T-cell (primary cell): ENCODE measurements at regions of chr16 and their contacts with region 1.

Region 1: DNA sequence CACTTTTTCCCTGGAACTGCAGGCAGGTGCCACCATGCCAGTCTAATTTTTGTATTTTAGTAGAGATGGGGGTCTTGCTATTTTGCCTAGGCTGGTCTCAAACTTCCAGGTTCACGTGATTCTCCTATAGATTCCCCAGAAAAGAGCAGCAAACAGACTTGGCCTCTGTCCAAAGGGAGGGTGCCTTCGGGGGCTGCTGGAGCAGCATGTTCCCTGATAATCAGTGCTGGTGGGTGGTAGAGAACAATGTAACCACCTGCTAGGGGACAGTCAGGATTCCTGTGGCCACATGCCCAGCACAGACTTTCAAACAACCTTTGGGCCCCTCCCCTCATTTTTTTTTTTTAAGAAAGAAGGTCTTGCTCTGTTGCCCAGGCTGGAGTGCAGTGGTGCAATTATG is 14.2 kb upstream of the CCNF start:
- DNase-seq: no peak
- ATAC-seq: no peak
- H3K4me3 ChIP-seq: no peak overlapping the region
- H3K4me3 Mint-ChIP-seq: no peak overlapping the region
- H3K27ac ChIP-seq: no peak overlapping the region
- H3K27ac Mint-ChIP-seq: no peak overlapping the region
- H3K4me1 ChIP-seq: no peaks in the 10 kb centered on the region
- H3K4me1 Mint-ChIP-seq: no peaks in the 10 kb centered on the region
- H3K27me3 ChIP-seq: peaks cover 2 to 30% of the 10 kb centered on the region in 2 experiments
- H3K27me3 Mint-ChIP-seq: peaks cover 11 to 20% of the 10 kb centered on the region in 2 donors

Region 2: DNA sequence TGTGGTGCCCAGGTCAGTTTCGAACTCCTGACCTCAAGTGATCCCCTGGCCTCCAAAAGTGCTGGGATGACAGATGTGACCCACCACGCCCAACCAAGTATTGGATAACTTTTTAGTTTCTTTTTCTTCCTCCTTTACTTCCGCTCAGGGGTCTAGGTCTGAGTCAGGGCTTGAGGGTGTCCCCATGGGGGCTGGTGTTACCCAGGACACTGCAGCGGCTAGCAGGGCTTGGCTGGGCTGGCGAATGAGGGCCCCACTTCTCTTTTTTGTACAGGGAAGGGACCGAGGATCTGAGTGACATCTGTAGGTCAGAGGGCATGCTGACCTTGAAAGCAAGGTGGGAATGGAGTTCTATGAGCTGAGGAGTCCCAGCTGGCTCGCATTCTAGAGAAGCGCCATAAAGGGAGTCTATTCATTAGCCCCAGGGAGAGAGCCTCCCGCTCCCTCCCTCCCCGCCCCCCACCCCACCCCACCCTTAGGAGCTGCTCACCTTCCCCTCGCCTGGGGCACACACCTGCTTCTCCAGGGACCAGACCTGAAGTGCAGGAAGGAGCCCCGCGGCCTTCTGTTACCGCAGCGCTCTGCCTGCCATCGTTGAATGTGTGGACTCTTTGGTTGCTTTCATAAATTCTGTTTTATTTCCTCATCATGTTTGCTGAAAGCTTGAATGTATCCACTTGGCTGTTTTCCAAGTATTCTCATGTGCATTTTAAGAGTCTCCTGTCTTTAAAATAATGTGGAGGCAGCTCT is 1964.5 kb before region 1 on chr16:
- CTCF ChIA-PET with region 1: no interaction called
- POLR2A ChIA-PET with region 1: interaction called in 1 of 2 experiments, 10 read pairs
- DNase-seq: no peak
- ATAC-seq: no peak
- H3K4me3 ChIP-seq: no peak overlapping the region
- H3K4me3 Mint-ChIP-seq: no peak overlapping the region
- H3K27ac ChIP-seq: no peak overlapping the region
- H3K27ac Mint-ChIP-seq: no peak overlapping the region
- H3K4me1 ChIP-seq: no peaks in the 10 kb centered on the region
- H3K4me1 Mint-ChIP-seq: peaks cover 0 to 10% (median 8%) of the 10 kb centered on the region in 3 donors
- H3K27me3 ChIP-seq: no peaks in the 10 kb centered on the region
- H3K27me3 Mint-ChIP-seq: no peaks in the 10 kb centered on the region